CD8-positive, alpha-beta T cell (primary cell): ENCODE measurements at regions of chr14 and their contacts with region 1.

Region 1: DNA sequence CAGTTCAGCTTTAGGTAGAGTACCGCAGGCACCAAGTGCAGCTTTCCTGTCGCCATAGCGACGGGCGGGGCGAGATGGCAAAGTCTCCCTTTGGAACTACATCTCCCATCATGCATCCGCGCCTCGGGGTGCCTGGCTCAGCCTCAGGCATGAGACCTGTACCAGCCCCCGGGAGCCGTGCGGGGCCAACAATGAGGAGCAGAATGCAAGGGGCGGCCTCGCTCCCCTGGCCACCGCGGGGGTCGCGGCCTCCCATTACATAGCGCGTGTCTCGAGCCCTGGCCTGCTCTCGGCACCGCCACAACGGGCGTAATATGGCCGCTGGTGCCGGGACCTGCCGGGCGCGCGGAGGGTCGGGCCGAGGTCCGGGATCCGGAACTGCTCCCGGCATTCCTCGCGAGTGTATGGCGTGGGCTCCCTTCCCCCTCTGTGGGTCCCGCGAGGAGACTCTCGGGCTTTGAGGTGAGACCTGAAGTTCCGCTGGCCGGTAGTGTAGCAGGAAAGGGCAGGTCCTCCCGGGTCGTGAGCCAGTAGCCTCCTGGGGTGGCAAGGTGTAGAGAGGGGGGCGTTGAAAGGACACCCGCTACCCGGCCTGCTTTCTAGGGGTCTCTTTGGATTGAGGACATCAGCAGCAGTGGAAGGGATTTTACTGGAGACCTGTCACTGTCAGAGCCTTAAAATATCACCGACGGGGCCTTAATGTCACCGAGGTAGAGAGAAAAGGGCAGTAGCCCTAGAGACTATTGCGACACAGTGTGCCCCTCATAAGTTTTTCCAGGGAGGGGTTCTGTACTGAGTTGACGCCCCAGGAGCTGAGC is at the start of gene THTPA:
- DNase-seq: peak; percentile 86 to 96 (median 93)
- ATAC-seq: peak; percentile 87
- H3K4me3 ChIP-seq: peak within 1 kb of the TSS; percentile 76 to 98
- H3K4me3 Mint-ChIP-seq: peak within 1 kb of the TSS; percentile 95
- H3K27ac ChIP-seq: peak within 1 kb of the TSS; percentile 64 to 79
- H3K27ac Mint-ChIP-seq: peak within 1 kb of the TSS; percentile 93
- H3K4me1 ChIP-seq: peaks cover 24% of the 10 kb centered on the region
- H3K4me1 Mint-ChIP-seq: peaks cover 31% of the 10 kb centered on the region
- H3K27me3 ChIP-seq: peaks cover 0 to 2% of the 10 kb centered on the region in 2 experiments
- H3K27me3 Mint-ChIP-seq: no peaks in the 10 kb centered on the region
- CTCF ChIP-seq: no peak
- total RNA-seq, gene THTPA: 10.7 to 12.4 TPM

Region 2: DNA sequence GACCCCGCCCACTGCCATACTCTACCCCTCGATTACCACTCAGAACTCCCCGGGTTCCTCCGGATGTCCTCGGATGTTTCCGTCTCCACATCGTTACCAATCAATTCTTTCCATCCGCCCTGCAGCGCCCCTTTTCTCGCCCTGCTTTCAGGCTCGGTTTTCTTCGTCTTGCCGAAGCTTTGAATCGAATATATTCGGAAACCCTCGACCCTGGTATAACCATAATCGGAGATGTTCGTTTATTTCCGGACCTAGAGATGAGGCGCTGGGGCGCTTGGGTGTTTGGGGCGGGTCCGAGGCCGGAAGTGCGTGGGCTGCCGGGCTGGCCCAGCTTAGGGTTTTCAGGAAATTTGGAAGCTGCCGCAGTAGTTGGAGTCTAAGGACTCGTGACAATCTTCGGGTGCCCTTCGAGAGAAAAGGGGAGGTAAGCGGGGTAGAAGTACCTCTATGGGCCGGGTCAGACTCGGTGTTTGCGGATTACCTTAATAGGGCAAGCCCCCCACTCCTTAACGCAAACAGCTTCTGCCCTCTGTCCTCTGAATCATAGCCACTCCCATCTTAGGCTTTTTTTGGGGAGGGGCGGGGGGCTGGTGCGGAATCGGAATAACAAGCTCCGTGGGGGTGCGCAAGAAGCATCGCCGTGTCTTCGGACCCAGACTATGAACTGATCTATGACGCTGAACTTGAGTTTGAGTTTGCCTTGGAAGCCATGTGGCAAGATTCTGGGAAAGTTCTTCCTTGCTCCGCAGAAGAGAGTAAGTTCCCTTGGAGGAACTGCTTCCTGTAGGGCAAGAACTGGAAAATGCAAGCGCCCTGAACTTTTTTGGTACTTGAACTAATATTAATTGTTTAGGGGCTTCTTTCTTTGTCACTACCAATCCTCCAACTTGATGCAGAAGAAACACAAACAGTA is 460.6 kb before region 1 on chr14 and contains the start of gene C14orf119:
- CTCF ChIA-PET with region 1: no interaction called
- POLR2A ChIA-PET with region 1: no interaction called
- intact Hi-C with region 1: loop called in 1 of 2 experiments (anchors 10 kb)
- DNase-seq: peak in 8 of 9 experiments; percentile 98 to 100 (median 100)
- ATAC-seq: peak; percentile 86
- H3K4me3 ChIP-seq: peak within 1 kb of the TSS; percentile 81 to 93
- H3K4me3 Mint-ChIP-seq: no peak within 1 kb of the TSS
- H3K27ac ChIP-seq: peak within 1 kb of the TSS; percentile 93 to 98
- H3K27ac Mint-ChIP-seq: no peak within 1 kb of the TSS
- H3K4me1 ChIP-seq: peaks cover 39% of the 10 kb centered on the region
- H3K4me1 Mint-ChIP-seq: peaks cover 51% of the 10 kb centered on the region
- H3K27me3 ChIP-seq: no peaks in the 10 kb centered on the region
- H3K27me3 Mint-ChIP-seq: no peaks in the 10 kb centered on the region
- CTCF ChIP-seq: no peak
- total RNA-seq, gene C14orf119: 3.5 to 3.8 TPM

Region 3: GRCh38 chr14:23469127-23469905 is 86.8 kb before region 1 on chr14 and contains the start of gene NGDN:
- CTCF ChIA-PET with region 1: interaction called, 279 read pairs
- POLR2A ChIA-PET with region 1: no interaction called
- intact Hi-C with region 1: loop called in 1 of 2 experiments (anchors 1 kb)
- DNase-seq: peak; percentile 84 to 99 (median 93)
- ATAC-seq: peak; percentile 89
- H3K4me3 ChIP-seq: peak within 1 kb of the TSS; percentile 71 to 83
- H3K4me3 Mint-ChIP-seq: no peak within 1 kb of the TSS
- H3K27ac ChIP-seq: peak within 1 kb of the TSS; percentile 80 to 93
- H3K27ac Mint-ChIP-seq: peak within 1 kb of the TSS; percentile 6
- H3K4me1 ChIP-seq: peaks cover 16% of the 10 kb centered on the region
- H3K4me1 Mint-ChIP-seq: peaks cover 12% of the 10 kb centered on the region
- H3K27me3 ChIP-seq: no peaks in the 10 kb centered on the region
- H3K27me3 Mint-ChIP-seq: no peaks in the 10 kb centered on the region
- CTCF ChIP-seq: peak; percentile 83
- total RNA-seq, gene NGDN: 173 TPM

Region 4: GRCh38 chr14:23512156-23512555 is 43.9 kb before region 1 on chr14:
- CTCF ChIA-PET with region 1: interaction called, 13 read pairs
- POLR2A ChIA-PET with region 1: interaction called, 3 read pairs
- intact Hi-C with region 1: no loop called
- DNase-seq: peak in 3 of 9 experiments; percentile 20 to 45 (median 26)
- ATAC-seq: peak; percentile 44
- H3K4me3 ChIP-seq: peak overlapping the region in 1 of 2 experiments; percentile 15
- H3K4me3 Mint-ChIP-seq: peak overlapping the region; percentile 82
- H3K27ac ChIP-seq: no peak overlapping the region
- H3K27ac Mint-ChIP-seq: no peak overlapping the region
- H3K4me1 ChIP-seq: no peaks in the 10 kb centered on the region
- H3K4me1 Mint-ChIP-seq: peaks cover 20% of the 10 kb centered on the region
- H3K27me3 ChIP-seq: no peaks in the 10 kb centered on the region
- H3K27me3 Mint-ChIP-seq: no peaks in the 10 kb centered on the region
- CTCF ChIP-seq: no peak

Region 5: DNA sequence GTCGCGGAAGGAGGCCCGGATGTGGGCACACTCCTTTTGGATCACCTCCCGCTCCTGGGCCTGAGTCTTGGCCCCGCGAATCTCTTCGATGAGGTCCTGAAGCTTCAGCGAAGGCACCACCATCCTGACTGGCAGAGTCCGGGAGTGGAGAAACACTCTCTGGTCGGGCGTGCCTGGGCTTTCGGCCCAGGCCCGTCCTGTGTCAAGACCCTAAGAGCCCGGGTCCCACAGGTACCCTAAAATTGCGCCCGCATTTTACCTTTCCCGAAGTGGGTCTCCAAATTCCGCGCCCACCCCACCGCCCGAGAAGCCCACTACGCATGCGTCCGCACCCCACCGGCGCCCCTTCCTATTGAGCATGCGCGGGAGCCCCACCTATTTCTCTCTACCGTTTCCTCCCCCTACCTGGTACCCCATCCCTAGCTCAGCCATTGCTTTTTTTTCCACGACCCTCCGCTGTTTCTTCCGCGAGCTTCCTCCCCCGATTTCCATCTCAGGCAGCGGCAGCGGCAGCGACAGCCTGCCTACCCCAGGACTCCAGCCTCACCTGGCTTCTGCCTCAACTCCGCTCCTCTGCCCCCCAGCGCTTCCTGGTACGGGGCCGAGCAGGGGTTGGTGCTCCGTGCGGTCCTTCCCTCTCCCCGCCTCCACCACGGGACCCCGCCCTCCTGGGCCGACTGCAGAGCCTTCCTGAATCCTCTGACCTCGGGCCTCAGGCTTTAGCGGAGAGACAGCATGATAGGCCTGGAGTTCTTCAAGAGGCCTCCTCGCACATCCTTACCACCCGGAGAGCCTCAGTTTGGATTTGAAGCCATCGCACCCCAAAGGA is 11.3 kb after region 1 on chr14 and contains the start of gene AP1G2:
- CTCF ChIA-PET with region 1: interaction called, 45 read pairs
- POLR2A ChIA-PET with region 1: interaction called, 6 read pairs
- intact Hi-C with region 1: loop called (anchors 1 kb)
- DNase-seq: peak; percentile 66 to 92 (median 84)
- ATAC-seq: peak; percentile 90
- H3K4me3 ChIP-seq: peak within 1 kb of the TSS; percentile 75 to 97
- H3K4me3 Mint-ChIP-seq: peak within 1 kb of the TSS; percentile 99
- H3K27ac ChIP-seq: peak within 1 kb of the TSS; percentile 86
- H3K27ac Mint-ChIP-seq: peak within 1 kb of the TSS; percentile 97
- H3K4me1 ChIP-seq: peaks cover 20% of the 10 kb centered on the region
- H3K4me1 Mint-ChIP-seq: peaks cover 44% of the 10 kb centered on the region
- H3K27me3 ChIP-seq: no peaks in the 10 kb centered on the region
- H3K27me3 Mint-ChIP-seq: peaks cover 1% of the 10 kb centered on the region
- CTCF ChIP-seq: no peak
- total RNA-seq, gene AP1G2: 153 to 160 TPM

Region 6: GRCh38 chr14:24271134-24271833 is 715.2 kb after region 1 on chr14 and contains the start of gene RABGGTA:
- CTCF ChIA-PET with region 1: no interaction called
- POLR2A ChIA-PET with region 1: no interaction called
- intact Hi-C with region 1: loop called in 1 of 2 experiments (anchors 10 kb)
- DNase-seq: peak; percentile 85 to 99 (median 91)
- ATAC-seq: peak; percentile 84
- H3K4me3 ChIP-seq: peak within 1 kb of the TSS; percentile 81 to 90
- H3K4me3 Mint-ChIP-seq: peak within 1 kb of the TSS; percentile 91
- H3K27ac ChIP-seq: peak within 1 kb of the TSS; percentile 93 to 97
- H3K27ac Mint-ChIP-seq: peak within 1 kb of the TSS; percentile 98
- H3K4me1 ChIP-seq: peaks cover 31% of the 10 kb centered on the region
- H3K4me1 Mint-ChIP-seq: peaks cover 36% of the 10 kb centered on the region
- H3K27me3 ChIP-seq: no peaks in the 10 kb centered on the region
- H3K27me3 Mint-ChIP-seq: no peaks in the 10 kb centered on the region
- CTCF ChIP-seq: peak; percentile 50
- total RNA-seq, gene RABGGTA: 59.1 to 65.9 TPM